Right cardiac atrium (tissue), 5 donors: ENCODE measurements at regions of chr17 and their contacts with region 1.

Region 1: DNA sequence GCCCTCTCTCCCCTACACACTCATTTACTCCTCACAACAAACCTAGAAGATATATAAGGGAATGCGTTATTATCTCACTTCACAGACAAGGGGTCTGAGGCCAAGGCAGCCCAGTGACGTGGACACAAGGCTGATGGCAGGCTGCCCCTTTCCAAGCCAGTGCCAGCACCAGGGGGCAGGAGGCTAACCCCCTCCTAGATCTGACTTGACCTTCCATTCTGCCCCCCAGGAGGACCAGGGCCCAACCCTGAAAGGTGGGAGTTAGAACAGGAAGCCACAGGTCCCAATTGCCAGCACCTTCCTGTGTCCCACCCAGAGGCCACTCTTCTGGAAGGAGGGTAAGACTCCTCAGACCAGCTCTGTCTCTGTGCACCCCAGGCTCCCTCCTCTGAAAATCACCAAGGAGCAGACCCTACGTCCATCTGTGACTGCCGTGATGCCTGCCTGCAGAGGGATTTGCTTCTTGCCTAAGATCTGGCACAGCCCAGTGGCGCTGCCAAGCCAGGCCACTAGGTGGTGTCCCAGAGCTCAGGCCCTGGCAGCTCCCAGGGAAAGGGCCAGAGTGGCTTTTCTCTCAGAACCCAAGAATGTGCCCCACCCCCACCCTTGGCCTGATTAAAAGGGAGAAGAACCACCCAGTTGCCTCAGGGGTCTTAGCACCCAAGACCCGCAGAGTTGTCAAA is 42.4 kb upstream of the MRPS23 start:
- DNase-seq: peak; percentile 84 to 97 (median 96)
- ATAC-seq: peak; percentile 58 to 74
- H3K4me3 ChIP-seq: no peak overlapping the region
- H3K27ac ChIP-seq: peak overlapping the region; percentile 100
- H3K4me1 ChIP-seq: peaks cover 42% of the 10 kb centered on the region
- H3K27me3 ChIP-seq: no peaks in the 10 kb centered on the region

Region 2: GRCh38 chr17:57955183-57955931 is 63.1 kb after region 1 on chr17 and contains the start of gene CUEDC1:
- intact Hi-C with region 1: loop called (anchors 5 to 10 kb)
- DNase-seq: peak; percentile 86 to 95 (median 95)
- ATAC-seq: peak; percentile 76 to 78
- H3K4me3 ChIP-seq: peak within 1 kb of the TSS; percentile 99
- H3K27ac ChIP-seq: peak within 1 kb of the TSS; percentile 98
- H3K4me1 ChIP-seq: peaks cover 23% of the 10 kb centered on the region
- H3K27me3 ChIP-seq: no peaks in the 10 kb centered on the region
- total RNA-seq, gene CUEDC1: 53.1 to 60.5 (median 55.1) TPM